GM12878 (cell line): ENCODE measurements at regions of chr1 and their contacts with region 1.

Region 1: DNA sequence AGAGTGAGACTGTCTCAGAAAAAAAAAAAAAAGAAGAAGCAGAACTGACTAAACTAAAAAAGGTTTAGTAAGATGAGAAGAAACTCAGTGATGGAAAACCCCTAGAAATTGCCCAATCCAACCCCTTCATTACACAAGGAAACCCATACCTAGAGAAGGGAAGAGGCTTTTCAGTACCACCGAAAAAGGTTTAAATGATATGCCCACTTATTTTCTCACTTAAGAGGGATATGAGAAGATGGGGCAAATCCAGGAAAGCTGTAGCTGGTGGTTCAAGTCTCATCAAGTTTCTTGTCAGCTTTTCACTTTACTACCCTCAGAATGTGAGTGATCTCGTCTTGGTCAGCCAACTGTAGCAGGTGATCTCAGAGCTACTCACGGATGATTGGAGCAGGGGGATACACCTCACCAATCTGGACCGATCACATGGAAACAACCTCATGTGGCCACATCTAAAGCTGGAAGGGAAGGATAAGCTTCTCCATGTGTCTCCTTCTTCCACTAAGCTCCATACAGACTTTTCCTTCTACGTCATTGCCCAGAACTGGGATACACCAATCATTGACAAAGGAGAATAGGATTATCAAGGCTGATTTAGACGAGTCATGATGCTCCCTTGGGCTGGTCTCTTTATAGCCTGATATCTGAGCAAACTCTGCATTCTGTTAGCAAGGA is 126.7 kb upstream of the POU3F1 start:
- DNase-seq: peak; percentile 86
- ATAC-seq: peak; percentile 90
- H3K4me3 ChIP-seq: 0 out of 2 replicates have a peak overlapping the region, but pooled peaks have one; percentile 1
- H3K27ac ChIP-seq: peak overlapping the region; percentile 93
- H3K4me1 ChIP-seq: peaks cover 30% of the 10 kb centered on the region
- H3K27me3 ChIP-seq: no peaks in the 10 kb centered on the region
- CTCF ChIP-seq: no peak
- EP300 ChIP-seq: peak in 1 of 2 experiments; percentile 62; a peak in 2 of 4 replicates
- POLR2A ChIP-seq: no peak
- RAD21 ChIP-seq: 0 out of 2 replicates have a peak, but pooled peaks have one; percentile 8

Region 2: DNA sequence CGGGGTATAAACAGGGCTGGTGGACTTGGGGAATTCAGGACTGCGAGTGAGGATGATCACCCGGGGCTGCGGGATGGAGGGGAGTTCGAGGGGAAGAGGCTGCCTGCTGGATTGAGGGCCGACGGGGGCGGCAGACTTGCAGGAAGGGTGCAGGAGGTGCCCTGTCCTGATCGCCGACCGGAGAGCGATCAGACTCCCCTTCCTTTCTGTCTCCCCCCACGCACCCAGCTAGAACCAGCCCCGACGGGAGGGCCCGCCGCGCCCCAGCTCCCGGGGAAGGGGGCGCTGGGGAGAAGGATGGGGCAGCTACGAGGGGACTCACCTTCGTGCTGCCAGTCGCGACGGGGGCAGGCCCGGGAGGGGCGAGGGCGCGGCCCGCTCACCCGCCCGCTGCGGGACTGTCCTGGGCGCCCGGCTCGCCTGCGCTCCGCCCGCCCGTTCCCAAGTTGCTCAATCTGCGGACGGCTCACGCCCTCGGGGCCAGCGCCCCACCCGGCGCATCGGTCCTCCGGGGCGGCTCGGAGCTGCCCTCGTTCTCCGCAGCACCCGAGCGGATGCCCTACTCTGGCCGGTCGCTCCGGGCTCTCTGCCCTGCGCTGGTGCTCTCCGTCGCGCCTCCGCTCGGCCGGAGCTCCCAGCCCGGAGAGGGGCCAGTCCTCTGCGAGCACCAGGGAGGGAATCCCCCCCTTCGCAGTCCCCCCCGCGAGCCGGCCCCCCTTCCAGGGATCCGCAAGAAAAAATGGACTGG is 538.9 kb before region 1 on chr1 and contains the start of gene RSPO1:
- CTCF ChIA-PET with region 1: no interaction called
- POLR2A ChIA-PET with region 1: no interaction called
- RAD21 ChIA-PET with region 1: no interaction called
- SMC1A ChIA-PET with region 1: no interaction called
- in situ Hi-C with region 1: no loop called
- intact Hi-C with region 1: no loop called
- DNase-seq: no peak
- ATAC-seq: no peak; the same call in 2 of the 3 replicates
- H3K4me3 ChIP-seq: no peak within 1 kb of the TSS
- H3K27ac ChIP-seq: no peak within 1 kb of the TSS
- H3K4me1 ChIP-seq: no peaks in the 10 kb centered on the region
- H3K27me3 ChIP-seq: peaks cover 24 to 30% of the 10 kb centered on the region in 2 experiments
- CTCF ChIP-seq: no peak
- EP300 ChIP-seq: no peak
- POLR2A ChIP-seq: no peak
- RAD21 ChIP-seq: no peak
- polyA plus RNA-seq, gene RSPO1: not detected

Region 3: DNA sequence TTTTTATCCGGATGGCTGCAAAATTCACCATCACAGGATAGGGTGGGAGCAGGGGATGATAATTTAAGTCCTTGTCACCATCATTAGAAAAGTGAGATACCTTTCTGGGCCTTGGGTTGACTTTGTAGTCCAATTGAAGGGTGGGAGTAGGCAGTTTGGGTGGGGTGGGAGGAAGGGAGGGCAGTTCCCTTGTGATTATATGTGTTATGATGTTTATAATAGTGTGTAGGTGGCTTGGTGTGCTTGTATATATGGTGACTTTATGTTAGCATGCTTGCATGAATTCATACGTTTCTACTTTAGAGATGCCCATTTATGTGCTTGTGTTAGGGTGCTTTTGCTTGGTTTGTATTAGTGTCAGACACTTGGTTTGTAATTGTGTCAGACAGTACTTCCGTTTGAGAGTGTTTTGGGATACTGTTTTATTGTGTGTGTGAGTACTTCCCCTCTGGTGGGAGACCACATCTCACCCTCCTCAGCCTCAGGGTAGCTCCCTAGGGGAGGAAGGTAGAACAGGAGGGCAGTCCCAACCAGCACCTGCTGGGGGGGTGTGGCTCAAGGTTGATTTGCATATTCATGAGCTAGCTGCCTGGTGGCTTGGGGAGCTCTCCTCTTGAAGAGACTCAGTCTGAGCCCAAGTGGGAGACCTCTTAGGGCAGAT is 120.4 kb before region 1 on chr1:
- CTCF ChIA-PET with region 1: interaction called, 4 read pairs
- POLR2A ChIA-PET with region 1: interaction called, 5 read pairs
- RAD21 ChIA-PET with region 1: interaction called, 12 read pairs
- SMC1A ChIA-PET with region 1: interaction called, 17 read pairs
- in situ Hi-C with region 1: no loop called
- intact Hi-C with region 1: no loop called
- DNase-seq: peak; percentile 58
- ATAC-seq: peak; percentile 85
- H3K4me3 ChIP-seq: no peak overlapping the region
- H3K27ac ChIP-seq: no peak overlapping the region
- H3K4me1 ChIP-seq: peaks cover 29% of the 10 kb centered on the region
- H3K27me3 ChIP-seq: no peaks in the 10 kb centered on the region
- CTCF ChIP-seq: no peak
- EP300 ChIP-seq: peak; percentile 54 to 71; a peak in 2 of 4 replicates
- POLR2A ChIP-seq: no peak
- RAD21 ChIP-seq: no peak

Region 4: GRCh38 chr1:38123391-38123992 is 49.8 kb before region 1 on chr1:
- CTCF ChIA-PET with region 1: no interaction called
- POLR2A ChIA-PET with region 1: no interaction called
- RAD21 ChIA-PET with region 1: no interaction called
- SMC1A ChIA-PET with region 1: no interaction called
- in situ Hi-C with region 1: loop called (anchors 5 kb)
- intact Hi-C with region 1: no loop called
- DNase-seq: no peak
- ATAC-seq: no peak
- H3K4me3 ChIP-seq: no peak overlapping the region
- H3K27ac ChIP-seq: no peak overlapping the region
- H3K4me1 ChIP-seq: no peaks in the 10 kb centered on the region
- H3K27me3 ChIP-seq: no peaks in the 10 kb centered on the region; a peak in 2 of 4 replicates
- CTCF ChIP-seq: no peak
- EP300 ChIP-seq: no peak
- POLR2A ChIP-seq: no peak
- RAD21 ChIP-seq: no peak

Region 5: GRCh38 chr1:38162866-38163265 is 10.4 kb before region 1 on chr1:
- CTCF ChIA-PET with region 1: interaction called, 5 read pairs
- POLR2A ChIA-PET with region 1: interaction called, 5 read pairs
- RAD21 ChIA-PET with region 1: interaction called, 8 read pairs
- SMC1A ChIA-PET with region 1: interaction called, 46 read pairs
- in situ Hi-C with region 1: no loop called
- intact Hi-C with region 1: no loop called
- DNase-seq: no peak
- ATAC-seq: no peak
- H3K4me3 ChIP-seq: no peak overlapping the region
- H3K27ac ChIP-seq: no peak overlapping the region
- H3K4me1 ChIP-seq: no peaks in the 10 kb centered on the region
- H3K27me3 ChIP-seq: 0 out of 4 replicates have a peak, but pooled peaks cover 0 to 3% of the 10 kb centered on the region in 2 experiments
- CTCF ChIP-seq: no peak
- EP300 ChIP-seq: no peak
- POLR2A ChIP-seq: no peak
- RAD21 ChIP-seq: no peak

Region 6: DNA sequence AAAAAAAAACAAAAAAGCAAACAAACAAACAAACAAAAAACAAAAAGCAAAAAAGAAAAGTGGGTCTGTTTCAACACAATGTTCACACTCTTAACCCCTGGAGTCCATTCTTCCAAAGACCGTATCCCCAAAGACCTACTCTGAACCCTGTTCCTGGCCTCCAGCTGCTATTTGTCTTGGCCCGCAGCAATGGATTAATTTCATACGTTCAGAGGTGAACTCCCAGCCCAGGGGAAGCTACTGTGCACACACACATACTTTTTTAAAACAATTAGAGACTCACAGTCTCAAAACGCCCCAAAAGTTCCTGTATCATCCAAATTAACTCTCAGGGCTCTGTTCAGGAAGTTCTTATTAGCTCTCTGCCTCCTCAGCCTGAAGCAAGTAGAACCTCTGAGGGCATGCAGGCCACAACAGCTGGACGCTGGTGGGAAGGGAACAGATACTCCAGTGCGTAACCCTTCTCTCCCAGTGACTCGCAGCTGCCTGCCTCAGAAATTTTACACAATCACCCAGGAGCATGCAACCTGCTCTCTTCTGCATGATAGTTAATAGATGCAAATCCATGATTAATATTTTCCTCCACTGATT is 290.9 kb after region 1 on chr1:
- CTCF ChIA-PET with region 1: no interaction called
- POLR2A ChIA-PET with region 1: no interaction called
- RAD21 ChIA-PET with region 1: no interaction called
- SMC1A ChIA-PET with region 1: no interaction called
- in situ Hi-C with region 1: no loop called
- intact Hi-C with region 1: no loop called
- DNase-seq: no peak
- ATAC-seq: no peak
- H3K4me3 ChIP-seq: no peak overlapping the region
- H3K27ac ChIP-seq: no peak overlapping the region
- H3K4me1 ChIP-seq: no peaks in the 10 kb centered on the region
- H3K27me3 ChIP-seq: no peaks in the 10 kb centered on the region
- CTCF ChIP-seq: no peak
- EP300 ChIP-seq: no peak
- POLR2A ChIP-seq: no peak
- RAD21 ChIP-seq: no peak

Region 7: DNA sequence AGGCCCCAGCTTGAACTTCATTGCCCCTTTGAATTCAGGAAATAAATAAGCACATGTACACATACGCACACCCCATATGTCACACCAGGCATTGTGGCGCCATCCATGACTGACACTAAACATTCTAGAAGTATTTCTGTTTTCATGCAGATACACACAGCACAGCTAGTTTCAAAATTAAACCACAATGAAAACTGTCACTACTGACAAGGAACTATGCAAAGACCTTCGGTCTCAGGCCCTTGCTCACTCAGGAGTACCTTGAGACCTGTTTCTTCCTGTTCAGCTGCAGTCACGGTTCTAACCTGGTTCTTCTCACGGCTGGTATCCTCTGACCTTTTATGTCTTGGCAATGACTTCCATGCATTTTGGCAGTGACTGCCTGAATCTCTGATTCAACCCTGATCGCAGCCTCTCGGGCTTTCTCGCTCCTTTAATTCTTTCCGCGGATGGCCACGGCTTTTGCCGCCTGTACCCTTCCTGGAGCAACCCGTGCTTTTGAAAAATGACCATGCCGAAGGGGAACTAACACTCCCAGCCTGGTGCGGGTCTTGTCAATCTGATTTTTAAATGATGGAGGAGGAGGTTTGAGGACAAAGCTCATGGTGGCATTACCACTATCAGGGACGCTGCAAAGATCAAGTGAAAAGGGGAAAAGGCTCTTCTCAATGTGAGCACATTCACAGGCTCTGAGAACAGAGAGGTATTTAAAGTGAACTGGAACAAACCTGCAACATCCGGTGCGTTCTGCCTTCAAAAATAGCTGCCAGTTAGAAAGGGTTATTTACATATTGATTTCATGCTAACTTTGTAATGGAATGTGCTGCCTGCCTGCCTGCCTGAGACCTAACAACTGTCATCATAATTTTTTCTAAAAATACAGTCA is 301.7 kb after region 1 on chr1:
- CTCF ChIA-PET with region 1: interaction called, 4 read pairs
- POLR2A ChIA-PET with region 1: interaction called, 3 read pairs
- RAD21 ChIA-PET with region 1: interaction called, 3 read pairs
- SMC1A ChIA-PET with region 1: interaction called, 19 read pairs
- in situ Hi-C with region 1: no loop called
- intact Hi-C with region 1: loop called (anchors 10 kb)
- DNase-seq: peak; percentile 97
- ATAC-seq: peak; percentile 90
- H3K4me3 ChIP-seq: peak overlapping the region; percentile 86
- H3K27ac ChIP-seq: peak overlapping the region; percentile 100
- H3K4me1 ChIP-seq: peaks cover 23% of the 10 kb centered on the region
- H3K27me3 ChIP-seq: no peaks in the 10 kb centered on the region
- CTCF ChIP-seq: no peak
- EP300 ChIP-seq: peak; percentile 58 to 71; a peak in 3 of 4 replicates
- POLR2A ChIP-seq: peak; percentile 81
- RAD21 ChIP-seq: peak; percentile 21; the same call in 1 of the 2 replicates